Activated CD8-positive, alpha-beta T cell treated with anti-CD3 and anti-CD28 coated beads for 36 hours (primary cell): ENCODE measurements at regions of chr15 and their contacts with region 1.

Region 1: GRCh38 chr15:95259513-95259912 is 1028.2 kb downstream of the MCTP2 start:
- DNase-seq: peak; percentile 64
- ATAC-seq: no peak
- H3K4me3 Mint-ChIP-seq: no peak overlapping the region
- H3K27ac Mint-ChIP-seq: no peak overlapping the region
- H3K4me1 Mint-ChIP-seq: no peaks in the 10 kb centered on the region
- H3K27me3 Mint-ChIP-seq: peaks cover 32% of the 10 kb centered on the region
- CTCF ChIP-seq: peak; percentile 75

Region 2: DNA sequence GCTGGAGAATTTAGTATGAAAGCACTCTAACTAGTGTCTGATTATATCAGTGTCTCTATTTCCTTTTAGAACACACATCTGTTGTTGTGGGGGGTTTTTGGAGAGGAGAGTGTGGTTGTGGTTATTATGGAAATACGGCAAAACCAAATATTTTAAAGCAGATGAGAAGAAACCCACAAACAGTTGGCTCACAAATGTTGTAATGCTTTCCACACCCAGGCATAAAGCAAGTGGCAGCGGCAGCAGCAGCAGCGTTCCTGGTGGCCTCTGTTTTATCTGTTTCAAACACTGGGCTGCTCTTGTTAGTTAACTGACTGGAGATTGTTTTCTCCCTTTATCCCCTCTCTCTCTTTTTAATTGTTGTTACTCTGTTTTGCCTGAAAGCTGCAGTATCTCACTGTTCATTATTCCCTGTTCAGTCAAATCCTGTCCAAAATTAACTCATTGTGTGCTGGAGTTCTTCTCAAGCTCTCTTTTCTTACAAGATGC is 25.5 kb after region 1 on chr15:
- CTCF ChIA-PET with region 1: interaction called, 12 read pairs
- POLR2A ChIA-PET with region 1: interaction called, 3 read pairs
- intact Hi-C with region 1: no loop called
- DNase-seq: peak; percentile 37
- ATAC-seq: peak; percentile 61
- H3K4me3 Mint-ChIP-seq: no peak overlapping the region
- H3K27ac Mint-ChIP-seq: no peak overlapping the region
- H3K4me1 Mint-ChIP-seq: peaks cover 10% of the 10 kb centered on the region
- H3K27me3 Mint-ChIP-seq: peaks cover 25% of the 10 kb centered on the region
- CTCF ChIP-seq: no peak

Region 3: DNA sequence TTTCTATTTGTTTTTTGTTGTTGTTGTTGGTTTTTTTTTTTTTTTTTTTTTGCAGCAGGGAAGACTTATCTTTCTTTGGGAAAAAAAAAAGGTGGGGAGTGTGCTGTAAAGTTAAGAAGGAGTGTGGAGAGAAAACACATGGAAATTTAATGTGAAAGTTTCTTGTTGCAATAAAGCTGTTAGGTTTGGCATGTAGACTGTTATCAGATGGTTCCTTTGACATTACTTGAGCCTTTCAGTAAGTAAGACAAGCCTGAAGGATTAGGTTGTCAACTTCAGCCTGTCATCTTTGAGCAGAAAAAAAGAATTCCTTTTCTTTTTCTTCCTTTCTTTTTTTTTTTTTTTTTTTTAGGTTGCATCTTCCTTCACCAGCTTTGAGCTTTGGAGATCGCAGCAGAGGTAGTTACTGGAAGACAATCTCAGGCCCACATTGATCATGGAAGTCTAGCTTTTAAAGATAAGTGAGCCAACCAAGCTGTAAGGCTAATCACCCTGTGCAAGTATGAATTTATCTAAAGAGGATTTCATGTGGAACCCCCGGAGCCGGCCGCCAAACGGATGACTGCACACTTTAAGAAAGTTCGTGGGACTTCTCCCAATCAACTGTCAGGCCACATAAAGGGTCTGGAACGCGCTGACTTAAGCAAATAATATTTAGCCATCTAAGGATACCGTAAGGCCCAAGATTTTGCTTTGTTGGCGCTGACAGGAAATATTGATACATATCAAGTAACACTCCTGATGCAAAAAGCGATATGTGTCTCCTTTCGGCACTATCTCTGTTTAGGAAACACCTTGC is 30.9 kb after region 1 on chr15:
- CTCF ChIA-PET with region 1: interaction called, 12 read pairs
- POLR2A ChIA-PET with region 1: interaction called, 3 read pairs
- intact Hi-C with region 1: no loop called
- DNase-seq: no peak
- ATAC-seq: no peak
- H3K4me3 Mint-ChIP-seq: no peak overlapping the region
- H3K27ac Mint-ChIP-seq: no peak overlapping the region
- H3K4me1 Mint-ChIP-seq: no peaks in the 10 kb centered on the region
- H3K27me3 Mint-ChIP-seq: peaks cover 43% of the 10 kb centered on the region
- CTCF ChIP-seq: no peak

Region 4: DNA sequence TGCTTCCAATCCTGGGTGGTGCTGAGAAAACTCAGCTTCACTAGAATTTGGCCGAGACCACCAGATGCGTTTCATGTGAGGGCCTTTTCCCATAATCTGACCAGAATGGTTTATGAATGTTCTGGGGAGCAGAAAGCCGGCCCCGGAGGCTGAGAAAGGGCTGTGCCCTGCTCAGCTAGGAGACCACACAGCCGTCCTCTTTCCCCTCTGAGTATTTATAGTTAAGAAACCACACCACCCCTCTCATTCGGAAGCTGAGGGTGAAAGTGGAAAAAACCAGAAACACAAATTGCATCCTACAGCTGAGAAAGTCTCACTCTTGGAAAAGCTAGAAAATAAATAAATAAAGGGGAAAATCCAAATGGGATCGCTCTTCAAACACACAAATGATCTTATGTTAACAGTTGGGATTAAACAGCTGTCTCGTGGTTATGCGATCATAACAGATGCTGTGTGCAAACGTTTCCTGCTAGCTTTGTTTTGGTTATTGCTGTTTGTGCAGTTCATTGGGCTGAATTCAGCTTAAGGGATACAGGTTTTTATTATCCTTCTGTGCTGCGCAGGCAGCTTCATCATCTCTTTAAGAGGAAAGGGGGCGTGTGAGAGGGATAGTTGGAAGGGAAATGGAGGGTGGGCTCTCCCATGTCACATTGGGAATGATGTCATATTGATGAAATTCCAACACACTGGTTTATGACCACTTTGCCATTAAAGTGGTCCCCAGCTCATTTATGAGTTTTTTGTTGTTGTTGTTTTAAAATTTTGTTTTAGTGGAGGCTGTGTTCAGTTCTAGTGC is 44.8 kb after region 1 on chr15:
- CTCF ChIA-PET with region 1: no interaction called
- POLR2A ChIA-PET with region 1: no interaction called
- intact Hi-C with region 1: no loop called
- DNase-seq: no peak
- ATAC-seq: no peak
- H3K4me3 Mint-ChIP-seq: no peak overlapping the region
- H3K27ac Mint-ChIP-seq: no peak overlapping the region
- H3K4me1 Mint-ChIP-seq: peaks cover 8% of the 10 kb centered on the region
- H3K27me3 Mint-ChIP-seq: peaks cover 17% of the 10 kb centered on the region
- CTCF ChIP-seq: no peak

Region 5: DNA sequence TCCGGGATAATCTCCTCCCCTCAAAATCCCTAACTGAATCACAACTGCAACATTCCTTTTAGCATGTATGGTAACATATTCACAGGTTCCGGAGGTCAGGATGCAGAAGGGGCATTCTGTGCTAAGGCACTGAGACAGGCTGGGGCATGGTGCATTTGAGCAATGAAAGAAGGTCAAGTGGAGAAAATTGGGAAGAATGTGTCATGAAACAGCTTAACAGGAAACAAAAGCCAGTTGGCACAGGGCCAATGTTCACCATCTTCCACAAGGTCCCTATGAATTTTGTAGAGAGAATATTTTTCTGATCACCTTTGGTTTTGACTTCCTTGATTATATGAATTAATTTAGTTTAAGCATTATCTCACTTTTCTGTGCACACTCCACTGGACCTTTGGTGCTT is 483.3 kb after region 1 on chr15:
- CTCF ChIA-PET with region 1: no interaction called
- POLR2A ChIA-PET with region 1: no interaction called
- intact Hi-C with region 1: no loop called
- DNase-seq: no peak
- ATAC-seq: no peak
- H3K4me3 Mint-ChIP-seq: no peak overlapping the region
- H3K27ac Mint-ChIP-seq: no peak overlapping the region
- H3K4me1 Mint-ChIP-seq: peaks cover 15% of the 10 kb centered on the region
- H3K27me3 Mint-ChIP-seq: peaks cover 1% of the 10 kb centered on the region
- CTCF ChIP-seq: no peak